ENCODE measurements at regions of chr19 and their contacts with region 1.

Region 1: GRCh38 chr19:36915992-36916830 is at the starts of genes ZNF568 and ZNF829:
- DNase-seq: peak; percentile 97
- ATAC-seq: peak; percentile 98
- H3K4me3 Mint-ChIP-seq: peak within 1 kb of the TSS; percentile 88
- H3K27ac Mint-ChIP-seq: peak within 1 kb of the TSS; percentile 98
- H3K4me1 Mint-ChIP-seq: peaks cover 15% of the 10 kb centered on the region
- H3K27me3 Mint-ChIP-seq: no peaks in the 10 kb centered on the region
- total RNA-seq, gene ZNF568: 6.5 to 8.4 TPM
- total RNA-seq, gene ZNF829: 7.1 TPM

Region 2: DNA sequence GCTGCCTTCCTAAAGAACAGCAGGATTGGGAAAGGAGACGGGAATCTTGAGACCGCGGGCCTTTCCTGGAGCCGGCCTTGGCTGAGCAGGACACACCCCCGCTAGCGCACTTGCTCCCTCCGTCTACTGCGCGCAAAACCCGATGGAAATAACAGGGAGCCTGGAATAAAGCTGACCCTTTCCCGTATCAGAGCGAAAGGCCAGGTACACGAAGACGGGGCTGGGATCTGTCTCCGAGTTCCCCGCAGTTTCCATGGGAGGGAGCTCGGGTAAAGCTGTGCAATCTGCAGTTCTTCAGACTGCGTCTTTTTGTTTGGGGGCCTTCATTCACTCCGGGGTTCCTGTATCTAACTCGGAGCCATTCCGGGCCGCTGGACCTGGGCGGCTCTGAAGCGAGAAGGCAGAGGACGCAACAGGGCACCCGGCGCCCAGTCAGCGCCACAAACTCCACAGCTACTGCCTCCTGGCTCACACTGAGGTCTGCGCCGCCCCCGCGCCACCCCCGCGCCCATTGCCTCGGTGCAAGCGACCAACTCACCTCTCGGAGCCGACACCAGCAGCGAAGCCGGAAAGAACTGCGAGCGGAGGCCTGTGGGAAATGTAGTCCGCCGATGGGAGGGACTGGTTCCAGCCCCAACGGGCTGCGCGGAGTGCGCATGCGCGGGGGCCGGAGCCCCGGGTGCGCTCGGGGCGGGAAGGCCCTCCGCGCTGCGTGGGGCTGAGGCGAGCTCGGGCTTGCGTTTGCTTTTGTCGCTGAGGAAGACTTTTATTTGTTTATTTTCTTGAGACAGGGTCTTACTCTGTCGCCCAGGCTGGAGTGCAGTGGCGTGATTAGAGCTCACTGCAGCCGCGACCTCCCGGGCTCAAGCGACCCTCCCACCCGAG is 537.3 kb before region 1 on chr19 and contains the start of gene ZFP14:
- CTCF ChIA-PET with region 1: no interaction called
- POLR2A ChIA-PET with region 1: no interaction called
- intact Hi-C with region 1: loop called in 1 of 2 experiments (anchors 1 kb)
- DNase-seq: peak; percentile 97
- ATAC-seq: peak; percentile 99
- H3K4me3 Mint-ChIP-seq: peak within 1 kb of the TSS; percentile 93
- H3K27ac Mint-ChIP-seq: peak within 1 kb of the TSS; percentile 88
- H3K4me1 Mint-ChIP-seq: peaks cover 18% of the 10 kb centered on the region
- H3K27me3 Mint-ChIP-seq: no peaks in the 10 kb centered on the region
- total RNA-seq, gene ZFP14: 1.4 to 1.8 TPM

Region 3: DNA sequence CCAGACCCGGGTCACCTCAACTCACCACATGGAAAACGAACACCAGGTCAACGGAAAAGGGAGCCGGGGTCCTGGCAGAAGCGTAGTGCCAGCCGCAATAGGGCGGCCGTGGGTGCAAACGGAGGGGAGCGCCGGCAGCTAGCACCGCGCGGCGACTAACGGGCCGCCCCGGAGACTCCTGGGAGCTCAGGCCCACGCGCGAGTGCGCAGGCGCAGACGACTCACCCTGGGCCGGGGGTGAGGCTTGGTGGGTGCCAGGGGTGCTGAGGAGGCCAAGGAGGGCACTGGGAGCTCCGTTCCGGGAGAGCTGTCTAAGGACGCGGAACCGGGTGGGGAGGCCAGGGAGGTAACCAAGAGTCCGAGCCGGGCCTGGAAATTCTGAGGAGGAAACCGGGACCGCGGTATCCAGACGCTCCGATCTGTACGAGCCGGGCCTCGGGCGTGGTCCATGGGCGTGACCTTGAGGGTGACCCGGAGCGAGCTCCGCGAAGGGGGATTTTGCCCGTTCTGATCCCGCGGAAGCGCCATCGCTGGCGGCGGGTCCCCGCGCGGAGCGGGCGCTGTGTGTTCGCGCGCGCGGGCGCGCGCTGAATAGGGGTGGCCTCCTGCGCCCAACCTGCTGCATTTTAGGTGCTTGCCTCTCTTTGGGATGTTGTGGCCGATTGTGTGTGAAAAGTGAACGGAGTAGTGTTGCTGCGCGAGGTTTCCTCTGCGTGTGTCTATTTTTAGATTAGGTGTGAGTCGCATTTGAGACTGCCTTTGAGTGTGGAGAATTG is 310.9 kb before region 1 on chr19 and contains the start of gene ZNF382:
- CTCF ChIA-PET with region 1: no interaction called
- POLR2A ChIA-PET with region 1: no interaction called
- intact Hi-C with region 1: loop called in 1 of 2 experiments (anchors 2 kb)
- DNase-seq: peak; percentile 94
- ATAC-seq: peak; percentile 86
- H3K4me3 Mint-ChIP-seq: peak within 1 kb of the TSS; percentile 81
- H3K27ac Mint-ChIP-seq: peak within 1 kb of the TSS; percentile 91
- H3K4me1 Mint-ChIP-seq: peaks cover 20% of the 10 kb centered on the region
- H3K27me3 Mint-ChIP-seq: no peaks in the 10 kb centered on the region
- total RNA-seq, gene ZNF382: 14.9 to 20.0 TPM

Region 4: GRCh38 chr19:36796076-36796992 is 119.9 kb before region 1 on chr19:
- CTCF ChIA-PET with region 1: no interaction called
- POLR2A ChIA-PET with region 1: no interaction called
- intact Hi-C with region 1: loop called (anchors 1 kb)
- DNase-seq: no peak
- ATAC-seq: no peak
- H3K4me3 Mint-ChIP-seq: peak overlapping the region; percentile 83
- H3K27ac Mint-ChIP-seq: peak overlapping the region; percentile 92
- H3K4me1 Mint-ChIP-seq: peaks cover 14% of the 10 kb centered on the region
- H3K27me3 Mint-ChIP-seq: peaks cover 4% of the 10 kb centered on the region

Region 5: GRCh38 chr19:37077934-37078725 is 161.9 kb after region 1 on chr19 and contains the start of gene ZNF420:
- CTCF ChIA-PET with region 1: interaction called, 3 read pairs
- POLR2A ChIA-PET with region 1: no interaction called
- intact Hi-C with region 1: loop called (anchors 1 kb)
- DNase-seq: peak; percentile 93
- ATAC-seq: peak; percentile 95
- H3K4me3 Mint-ChIP-seq: peak within 1 kb of the TSS; percentile 97
- H3K27ac Mint-ChIP-seq: peak within 1 kb of the TSS; percentile 98
- H3K4me1 Mint-ChIP-seq: peaks cover 23% of the 10 kb centered on the region
- H3K27me3 Mint-ChIP-seq: no peaks in the 10 kb centered on the region
- total RNA-seq, gene ZNF420: 9.1 to 12.8 TPM

Region 6: GRCh38 chr19:37594304-37594981 is 678.2 kb after region 1 on chr19 and contains the starts of genes ZNF540 and ZNF571:
- CTCF ChIA-PET with region 1: no interaction called
- POLR2A ChIA-PET with region 1: no interaction called
- intact Hi-C with region 1: loop called in 1 of 2 experiments (anchors 1 kb)
- DNase-seq: peak; percentile 97
- ATAC-seq: peak; percentile 97
- H3K4me3 Mint-ChIP-seq: peak within 1 kb of the TSS; percentile 94
- H3K27ac Mint-ChIP-seq: peak within 1 kb of the TSS; percentile 99
- H3K4me1 Mint-ChIP-seq: peaks cover 27% of the 10 kb centered on the region
- H3K27me3 Mint-ChIP-seq: no peaks in the 10 kb centered on the region
- total RNA-seq, gene ZNF540: 0.67 to 1.1 TPM
- total RNA-seq, gene ZNF571: 2.4 to 2.9 TPM